ENCODE measurements at regions of chr4 and their contacts with region 1.

Region 1: GRCh38 chr4:73019462-73020047 is 50.0 kb downstream of the COX18 start:
- DNase-seq: no peak
- H3K4me3 Mint-ChIP-seq: no peak overlapping the region
- H3K27ac Mint-ChIP-seq: no peak overlapping the region
- H3K4me1 Mint-ChIP-seq: peaks cover 2% of the 10 kb centered on the region
- H3K27me3 Mint-ChIP-seq: peaks cover 8% of the 10 kb centered on the region

Region 2: DNA sequence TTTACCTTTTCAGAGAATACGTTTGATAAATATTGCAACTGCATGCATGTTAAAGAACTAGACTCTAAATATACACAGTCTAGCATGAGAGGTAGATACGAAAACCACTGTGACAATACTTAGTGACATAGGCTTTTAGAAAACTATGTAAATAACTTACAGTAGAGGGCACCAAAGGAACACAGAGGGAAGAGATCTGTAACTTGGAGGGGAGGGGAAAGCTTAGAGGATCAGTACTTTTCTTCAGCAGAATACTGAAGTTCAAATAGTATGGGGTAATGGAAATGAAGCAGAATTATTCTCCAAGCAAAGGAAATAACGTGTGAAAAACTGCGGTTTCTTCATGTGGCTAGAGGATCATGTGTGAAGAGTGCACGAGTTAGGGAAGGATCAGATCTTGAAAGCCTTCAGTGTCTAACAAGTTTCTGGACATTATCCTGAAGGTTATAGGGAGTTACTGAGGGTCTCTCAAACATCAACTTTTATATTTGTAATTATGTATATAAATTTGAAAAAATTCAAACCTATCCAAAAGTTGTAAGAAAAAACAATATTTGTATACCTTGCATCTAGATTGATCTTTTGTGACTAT is 723.5 kb before region 1 on chr4:
- intact Hi-C with region 1: loop called (anchors 10 kb)
- DNase-seq: no peak
- H3K4me3 Mint-ChIP-seq: no peak overlapping the region
- H3K27ac Mint-ChIP-seq: no peak overlapping the region
- H3K4me1 Mint-ChIP-seq: no peaks in the 10 kb centered on the region
- H3K27me3 Mint-ChIP-seq: peaks cover 2% of the 10 kb centered on the region

Region 3: GRCh38 chr4:72505314-72505744 is 514.2 kb before region 1 on chr4:
- intact Hi-C with region 1: loop called (anchors 10 kb)
- DNase-seq: no peak
- H3K4me3 Mint-ChIP-seq: no peak overlapping the region
- H3K27ac Mint-ChIP-seq: no peak overlapping the region
- H3K4me1 Mint-ChIP-seq: no peaks in the 10 kb centered on the region
- H3K27me3 Mint-ChIP-seq: no peaks in the 10 kb centered on the region

Region 4: DNA sequence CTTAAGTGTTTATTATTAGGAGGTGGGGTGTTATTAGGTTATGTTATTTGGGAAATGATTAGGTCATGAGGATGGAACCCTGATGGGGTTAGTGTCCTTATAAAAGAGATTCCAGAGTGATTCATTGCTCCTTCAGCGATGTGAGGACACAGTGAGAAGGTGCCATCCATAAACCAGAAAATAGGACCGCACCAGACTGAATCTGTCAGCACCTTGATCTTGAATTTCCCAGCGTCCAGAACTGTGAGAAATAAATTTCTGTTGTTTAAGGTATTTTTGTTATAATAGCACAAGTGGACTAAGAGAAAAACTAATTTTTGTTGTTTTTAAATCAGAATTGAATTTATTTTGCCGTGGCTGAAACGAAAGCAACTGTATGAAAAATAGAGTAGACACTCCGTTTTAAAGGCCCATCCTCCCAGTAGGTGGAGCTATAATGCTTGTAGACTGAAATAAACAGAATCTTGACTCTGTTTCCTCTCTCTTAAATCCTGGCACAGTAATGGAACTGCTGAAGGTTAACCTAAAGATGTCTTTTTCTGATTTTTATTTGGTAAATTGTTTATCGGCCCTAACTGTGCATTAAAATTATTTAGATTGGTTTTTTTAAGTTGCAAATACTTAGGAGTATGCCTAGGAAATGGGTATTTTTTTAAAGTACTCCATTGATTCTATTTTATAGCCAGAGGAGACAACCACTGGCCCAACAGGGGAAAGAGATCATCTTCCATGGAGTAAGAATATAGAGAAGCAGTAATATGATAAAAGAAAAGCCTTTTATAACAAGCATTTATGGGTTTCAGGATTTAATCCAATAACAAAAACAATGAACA is 317.4 kb before region 1 on chr4:
- intact Hi-C with region 1: loop called (anchors 1 kb)
- DNase-seq: no peak
- H3K4me3 Mint-ChIP-seq: peak overlapping the region; percentile 64
- H3K27ac Mint-ChIP-seq: no peak overlapping the region
- H3K4me1 Mint-ChIP-seq: no peaks in the 10 kb centered on the region
- H3K27me3 Mint-ChIP-seq: peaks cover 4% of the 10 kb centered on the region

Region 5: DNA sequence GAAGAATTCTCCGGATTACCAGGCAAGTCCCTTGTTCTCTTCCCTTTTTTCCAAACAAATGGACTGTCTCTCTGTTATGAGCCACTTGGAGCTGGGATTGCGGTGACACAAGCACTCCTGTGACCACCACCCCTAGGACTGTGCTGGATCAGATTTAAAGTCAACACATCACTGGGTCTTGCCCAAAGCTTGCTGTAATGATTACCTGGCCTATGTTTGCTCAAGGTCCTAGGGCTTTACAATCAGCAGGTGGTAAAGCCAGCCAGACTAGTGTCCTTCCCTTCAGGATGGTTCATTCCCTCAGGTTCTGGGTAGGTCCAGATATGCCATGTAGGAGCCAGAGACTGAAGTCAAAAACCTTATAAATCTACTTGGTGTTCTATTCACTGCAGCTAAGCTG is 94.7 kb before region 1 on chr4:
- intact Hi-C with region 1: no loop called
- DNase-seq: no peak
- H3K4me3 Mint-ChIP-seq: no peak overlapping the region
- H3K27ac Mint-ChIP-seq: no peak overlapping the region
- H3K4me1 Mint-ChIP-seq: no peaks in the 10 kb centered on the region
- H3K27me3 Mint-ChIP-seq: no peaks in the 10 kb centered on the region

Region 6: DNA sequence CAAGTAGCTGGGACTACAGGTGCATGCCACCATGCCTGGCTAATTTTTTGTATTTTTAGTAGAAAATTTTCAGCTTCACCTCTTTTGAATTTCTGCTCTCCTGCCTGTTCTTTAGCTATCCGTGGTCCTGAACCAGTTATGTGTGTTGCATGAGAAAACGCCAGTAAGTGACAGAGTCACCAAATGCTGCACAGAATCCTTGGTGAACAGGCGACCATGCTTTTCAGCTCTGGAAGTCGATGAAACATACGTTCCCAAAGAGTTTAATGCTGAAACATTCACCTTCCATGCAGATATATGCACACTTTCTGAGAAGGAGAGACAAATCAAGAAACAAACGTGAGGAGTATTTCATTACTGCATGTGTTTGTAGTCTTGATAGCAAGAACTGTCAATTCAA is 398.4 kb after region 1 on chr4:
- intact Hi-C with region 1: no loop called
- DNase-seq: no peak
- H3K4me3 Mint-ChIP-seq: no peak overlapping the region
- H3K27ac Mint-ChIP-seq: no peak overlapping the region
- H3K4me1 Mint-ChIP-seq: no peaks in the 10 kb centered on the region
- H3K27me3 Mint-ChIP-seq: no peaks in the 10 kb centered on the region

Measured in activated T-helper 2 cell treated with anti-CD3 and anti-CD28 coated beads, Interferon-gamma antibody, Interleukin-2, Interleukin-4, amounts not matched to agents 10 μg/mL and 5 μg/mL and 100 μg/mL, durations not matched to agents 14 hours and 24 hours and 36 hours (primary cell).